PC-3 (cell line): ENCODE measurements at regions of chr10 and their contacts with region 1.

Region 1: GRCh38 chr10:66627156-66627555 is 298.7 kb upstream of the LRRTM3 start:
- DNase-seq: peak; percentile 96
- ATAC-seq: peak; percentile 92
- H3K4me3 ChIP-seq: no peak overlapping the region
- H3K27ac ChIP-seq: no peak overlapping the region
- H3K4me1 ChIP-seq: peaks cover 37% of the 10 kb centered on the region
- H3K27me3 ChIP-seq: no peaks in the 10 kb centered on the region
- CTCF ChIP-seq: peak; percentile 99

Region 2: DNA sequence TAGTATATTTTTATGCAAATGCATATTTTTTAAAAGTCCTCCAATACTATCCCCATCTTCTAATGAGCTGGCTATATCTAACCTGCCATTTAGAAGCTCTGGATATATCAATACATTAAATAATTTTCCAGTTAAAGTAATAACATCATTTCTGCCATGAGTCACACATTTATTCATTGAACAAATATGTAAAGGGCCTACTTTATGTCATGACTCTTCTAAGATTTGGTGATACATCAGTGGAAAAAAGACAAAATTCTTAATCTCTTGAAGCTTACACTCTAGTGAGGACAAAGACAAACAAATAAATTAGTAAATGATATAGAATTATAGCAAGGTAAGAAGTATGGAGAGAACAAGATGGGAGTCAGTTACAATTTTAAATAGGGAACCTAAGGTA is 418.1 kb before region 1 on chr10:
- CTCF ChIA-PET with region 1: no interaction called
- POLR2A ChIA-PET with region 1: no interaction called
- intact Hi-C with region 1: loop called (anchors 5 kb)
- DNase-seq: peak; percentile 93
- ATAC-seq: peak; percentile 90
- H3K4me3 ChIP-seq: no peak overlapping the region
- H3K27ac ChIP-seq: peak overlapping the region; percentile 6; the same call in 1 of the 2 replicates
- H3K4me1 ChIP-seq: peaks cover 20% of the 10 kb centered on the region
- H3K27me3 ChIP-seq: no peaks in the 10 kb centered on the region
- CTCF ChIP-seq: no peak

Region 3: GRCh38 chr10:66349726-66350125 is 277.4 kb before region 1 on chr10:
- CTCF ChIA-PET with region 1: no interaction called
- POLR2A ChIA-PET with region 1: no interaction called
- intact Hi-C with region 1: loop called (anchors 1 kb)
- DNase-seq: peak; percentile 99
- ATAC-seq: peak; percentile 84
- H3K4me3 ChIP-seq: peak overlapping the region; percentile 30
- H3K27ac ChIP-seq: peak overlapping the region; percentile 84
- H3K4me1 ChIP-seq: peaks cover 38% of the 10 kb centered on the region
- H3K27me3 ChIP-seq: no peaks in the 10 kb centered on the region
- CTCF ChIP-seq: no peak

Region 4: DNA sequence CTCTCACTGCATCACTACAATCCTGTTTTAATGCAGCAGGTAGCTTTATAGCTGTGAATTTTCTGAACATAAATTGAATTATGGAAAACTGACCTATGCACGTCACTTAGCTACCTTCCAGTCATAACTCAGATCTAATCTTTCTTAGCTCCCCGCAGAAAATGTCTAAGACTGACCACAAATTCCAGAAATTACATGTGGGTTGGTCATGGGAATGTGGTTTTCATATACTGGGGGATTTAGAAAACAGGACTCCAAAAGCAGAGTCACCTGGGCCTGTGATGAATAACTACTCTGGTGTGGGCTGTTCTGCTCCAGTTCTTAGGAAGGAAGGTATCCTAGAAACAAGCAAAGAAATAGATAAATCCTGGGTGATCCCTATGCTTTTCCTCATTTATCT is 120.3 kb after region 1 on chr10:
- CTCF ChIA-PET with region 1: no interaction called
- POLR2A ChIA-PET with region 1: no interaction called
- intact Hi-C with region 1: loop called (anchors 2 kb)
- DNase-seq: peak; percentile 100
- ATAC-seq: peak; percentile 89
- H3K4me3 ChIP-seq: no peak overlapping the region
- H3K27ac ChIP-seq: peak overlapping the region; percentile 68
- H3K4me1 ChIP-seq: peaks cover 26% of the 10 kb centered on the region
- H3K27me3 ChIP-seq: no peaks in the 10 kb centered on the region
- CTCF ChIP-seq: no peak

Region 5: GRCh38 chr10:66931340-66931948 is 304.3 kb after region 1 on chr10:
- CTCF ChIA-PET with region 1: interaction called, 5 read pairs
- POLR2A ChIA-PET with region 1: no interaction called
- intact Hi-C with region 1: loop called (anchors 1 kb)
- DNase-seq: peak; percentile 97
- ATAC-seq: peak; percentile 78
- H3K4me3 ChIP-seq: no peak overlapping the region
- H3K27ac ChIP-seq: no peak overlapping the region
- H3K4me1 ChIP-seq: peaks cover 3% of the 10 kb centered on the region; the same call in 1 of the 2 replicates
- H3K27me3 ChIP-seq: peaks cover 33% of the 10 kb centered on the region
- CTCF ChIP-seq: peak; percentile 100